Activated CD4-positive, alpha-beta T cell treated with anti-CD3 and anti-CD28 coated beads for 36 hours (primary cell): ENCODE measurements at regions of chr7 and their contacts with region 1.

Region 1: DNA sequence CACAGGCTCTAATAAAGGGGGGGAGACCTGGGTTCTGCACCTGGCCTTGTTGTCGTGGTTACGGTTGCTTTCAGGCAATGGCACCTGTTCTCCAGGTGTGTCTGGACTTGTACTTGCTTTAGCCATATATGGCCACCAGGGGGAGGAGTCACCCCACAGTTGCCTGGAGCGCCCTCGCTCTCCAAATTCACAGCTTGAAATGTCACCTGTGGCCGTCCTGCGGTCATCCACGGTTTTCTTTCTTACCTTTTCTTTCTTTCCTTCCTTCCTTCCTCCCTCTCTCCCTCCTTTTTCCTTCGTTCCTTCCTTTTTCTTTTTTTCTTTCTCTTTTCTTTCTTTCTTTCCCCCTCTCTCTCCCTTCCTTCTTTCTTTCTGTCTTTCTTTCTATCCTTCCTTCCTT is 157.2 kb upstream of the ZNF92 start:
- DNase-seq: peak; percentile 75
- ATAC-seq: no peak
- H3K4me3 Mint-ChIP-seq: no peak overlapping the region
- H3K27ac Mint-ChIP-seq: no peak overlapping the region
- H3K4me1 Mint-ChIP-seq: no peaks in the 10 kb centered on the region
- H3K27me3 Mint-ChIP-seq: no peaks in the 10 kb centered on the region

Region 2: DNA sequence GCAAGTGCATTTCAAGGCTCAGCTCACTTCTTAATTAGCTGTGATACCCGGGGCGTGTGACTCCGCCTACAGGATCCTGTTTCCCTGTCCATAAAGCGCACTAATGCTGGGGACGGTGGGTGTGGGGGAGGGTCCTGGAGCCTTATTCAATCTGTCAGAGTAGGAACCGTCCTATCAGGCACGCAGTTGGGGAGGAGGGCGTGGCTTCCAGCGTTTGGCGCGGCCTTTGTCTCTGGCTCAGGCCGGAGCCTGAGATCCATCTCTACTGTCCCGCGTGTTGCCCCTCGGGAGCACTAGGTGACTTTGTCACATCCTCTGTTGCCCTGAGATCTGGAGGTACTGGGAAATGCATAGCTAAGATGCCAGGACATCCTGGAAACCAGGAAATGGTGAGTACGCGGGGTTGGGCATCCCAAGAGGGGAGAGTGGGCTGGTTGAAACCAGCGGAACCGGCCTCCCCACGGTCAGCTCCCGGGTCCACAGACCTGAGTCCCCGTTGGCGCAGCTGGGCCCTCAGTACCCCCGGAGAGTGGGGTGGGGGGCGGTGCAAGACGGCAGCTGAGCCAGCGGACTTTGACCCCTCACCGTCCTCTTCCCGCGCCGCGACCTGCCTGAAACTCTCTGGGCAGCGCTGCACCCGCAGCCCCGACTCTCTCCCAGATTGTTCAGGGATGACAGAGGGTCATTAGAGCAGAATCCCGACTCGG is 52.8 kb after region 1 on chr7:
- CTCF ChIA-PET with region 1: no interaction called
- POLR2A ChIA-PET with region 1: no interaction called
- intact Hi-C with region 1: loop called in 1 of 2 experiments (anchors 5 kb)
- DNase-seq: peak; percentile 77
- ATAC-seq: peak; percentile 96
- H3K4me3 Mint-ChIP-seq: peak overlapping the region; percentile 72
- H3K27ac Mint-ChIP-seq: peak overlapping the region; percentile 51
- H3K4me1 Mint-ChIP-seq: peaks cover 6% of the 10 kb centered on the region
- H3K27me3 Mint-ChIP-seq: peaks cover 34% of the 10 kb centered on the region

Region 3: GRCh38 chr7:65307651-65308299 is 91.3 kb after region 1 on chr7:
- CTCF ChIA-PET with region 1: interaction called, 15 read pairs
- POLR2A ChIA-PET with region 1: no interaction called
- intact Hi-C with region 1: loop called (anchors 1 kb)
- DNase-seq: peak; percentile 52
- ATAC-seq: peak; percentile 69
- H3K4me3 Mint-ChIP-seq: no peak overlapping the region
- H3K27ac Mint-ChIP-seq: no peak overlapping the region
- H3K4me1 Mint-ChIP-seq: no peaks in the 10 kb centered on the region
- H3K27me3 Mint-ChIP-seq: peaks cover 1% of the 10 kb centered on the region

Region 4: DNA sequence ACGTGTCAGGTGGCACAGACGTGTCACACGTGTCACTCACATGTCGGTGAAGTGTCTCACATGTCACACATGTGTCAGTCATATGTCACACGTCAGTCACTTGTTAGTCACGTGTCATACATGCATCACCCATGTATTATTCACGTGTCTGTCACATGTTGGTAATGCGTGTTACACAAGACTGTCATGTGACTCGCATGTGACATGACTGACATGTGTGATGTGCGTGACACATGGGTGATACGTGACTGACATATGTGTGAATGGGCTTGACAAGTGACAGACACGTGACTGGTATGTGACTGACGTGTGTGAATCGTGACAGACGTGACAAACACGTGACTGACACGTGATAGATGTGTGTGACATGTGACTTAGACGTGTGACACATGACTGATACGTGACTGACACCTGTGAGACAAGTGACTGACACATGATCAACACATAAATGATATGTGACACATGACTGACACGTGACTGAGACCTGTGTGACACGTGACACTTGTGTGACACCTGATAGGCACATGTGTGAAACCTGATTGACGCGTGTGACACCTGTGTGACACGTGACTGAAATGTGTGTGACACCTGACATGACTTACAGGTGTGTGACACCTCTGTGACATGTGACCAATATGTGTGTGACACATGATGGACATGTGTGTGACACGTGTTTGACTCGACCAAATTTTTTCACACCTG is 213.3 kb after region 1 on chr7:
- CTCF ChIA-PET with region 1: no interaction called
- POLR2A ChIA-PET with region 1: no interaction called
- intact Hi-C with region 1: no loop called
- DNase-seq: no peak
- ATAC-seq: no peak
- H3K4me3 Mint-ChIP-seq: no peak overlapping the region
- H3K27ac Mint-ChIP-seq: no peak overlapping the region
- H3K4me1 Mint-ChIP-seq: no peaks in the 10 kb centered on the region
- H3K27me3 Mint-ChIP-seq: peaks cover 4% of the 10 kb centered on the region